ENCODE measurements at regions of chr5 and their contacts with region 1.

Region 1: GRCh38 chr5:172188033-172188892 is at the start of gene STK10:
- DNase-seq: peak in 1 of 2 experiments; percentile 93
- H3K4me3 ChIP-seq: peak within 1 kb of the TSS; percentile 61 to 84 (median 79)
- H3K27ac ChIP-seq: no peak within 1 kb of the TSS
- H3K4me1 ChIP-seq: peaks cover 0 to 4% (median 1%) of the 10 kb centered on the region in 4 experiments; a peak in 3 of 7 replicates
- H3K27me3 ChIP-seq: no peaks in the 10 kb centered on the region; a peak in 1 of 7 replicates
- CTCF ChIP-seq: peak; percentile 86 to 94 (median 86)
- EP300 ChIP-seq: peak in 1 of 2 experiments; percentile 91; a peak in 1 of 3 replicates
- POLR2A ChIP-seq: no peak; a peak in 1 of 3 replicates
- RAD21 ChIP-seq: peak; percentile 89 to 91
- total RNA-seq, gene STK10: 20.8 and 21.4 TPM in 2 replicates

Region 2: GRCh38 chr5:172162323-172162986 is 25.8 kb before region 1 on chr5:
- CTCF ChIA-PET with region 1: interaction called, 15 read pairs
- POLR2A ChIA-PET with region 1: interaction called, 6 read pairs
- DNase-seq: no peak
- H3K4me3 ChIP-seq: no peak overlapping the region
- H3K27ac ChIP-seq: no peak overlapping the region
- H3K4me1 ChIP-seq: no peaks in the 10 kb centered on the region; a peak in 1 of 7 replicates
- H3K27me3 ChIP-seq: no peaks in the 10 kb centered on the region
- CTCF ChIP-seq: no peak
- EP300 ChIP-seq: no peak
- POLR2A ChIP-seq: no peak
- RAD21 ChIP-seq: no peak

Region 3: GRCh38 chr5:172173831-172174153 is 14.5 kb before region 1 on chr5:
- CTCF ChIA-PET with region 1: interaction called, 11 read pairs
- POLR2A ChIA-PET with region 1: interaction called, 27 read pairs
- DNase-seq: no peak
- H3K4me3 ChIP-seq: no peak overlapping the region
- H3K27ac ChIP-seq: no peak overlapping the region
- H3K4me1 ChIP-seq: peaks cover 0 to 15% (median 2%) of the 10 kb centered on the region in 4 experiments; a peak in 4 of 7 replicates
- H3K27me3 ChIP-seq: no peaks in the 10 kb centered on the region
- CTCF ChIP-seq: no peak
- EP300 ChIP-seq: no peak
- POLR2A ChIP-seq: no peak
- RAD21 ChIP-seq: no peak